Panc1 (cell line): ENCODE measurements at regions of chr10 and their contacts with region 1.

Region 1: DNA sequence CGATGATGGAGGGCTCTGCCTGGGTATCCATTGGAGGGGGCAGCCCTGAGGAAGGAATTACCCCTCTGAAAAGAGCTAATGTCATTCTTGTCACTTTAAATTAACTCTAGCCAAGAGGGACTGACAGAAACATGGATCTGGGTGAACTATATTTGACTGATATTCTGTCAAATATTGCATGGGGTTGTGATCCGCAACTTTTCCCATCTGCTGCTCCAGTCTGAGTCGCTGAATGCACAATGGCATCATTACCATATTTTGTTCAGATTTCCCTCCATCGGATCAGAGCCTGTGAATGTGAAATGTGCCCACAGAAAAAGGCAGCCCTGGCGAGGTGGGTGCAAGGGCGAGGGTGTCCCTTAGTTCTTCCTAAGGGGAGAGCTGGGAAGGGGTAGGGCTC is 100.5 kb upstream of the TCF7L2 start:
- DNase-seq: no peak
- ATAC-seq: no peak
- H3K4me3 ChIP-seq: no peak overlapping the region
- H3K27ac ChIP-seq: no peak overlapping the region
- H3K4me1 ChIP-seq: no peaks in the 10 kb centered on the region
- H3K27me3 ChIP-seq: no peaks in the 10 kb centered on the region
- CTCF ChIP-seq: no peak

Region 2: DNA sequence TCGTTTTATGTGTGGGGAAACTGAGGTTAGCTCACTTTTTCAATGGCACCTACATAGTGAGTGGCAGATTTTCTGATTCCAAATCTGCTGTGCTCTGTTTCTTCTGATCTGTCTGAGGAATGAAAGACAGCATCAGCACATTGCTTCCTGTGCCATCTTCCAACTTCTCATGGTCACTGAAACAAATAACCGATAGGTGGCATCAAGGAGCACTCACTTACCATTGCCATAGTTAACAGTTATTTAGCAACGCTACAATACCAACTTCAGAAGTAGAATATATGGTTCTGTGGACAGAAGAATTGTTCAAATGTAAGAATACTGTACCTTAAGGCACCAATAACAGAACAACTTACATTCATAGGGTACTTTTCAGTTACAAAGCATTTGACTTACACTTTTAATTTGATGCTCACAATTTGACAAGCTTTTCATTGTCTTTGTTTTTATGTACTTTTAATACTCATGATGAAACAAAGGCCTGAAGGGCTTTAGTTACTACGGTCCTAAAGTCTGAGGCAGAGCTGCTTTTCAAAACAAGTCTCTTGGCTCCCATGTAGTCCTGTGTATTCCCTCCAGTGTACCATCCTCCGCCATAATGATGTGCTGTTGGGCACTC is 128.4 kb before region 1 on chr10:
- CTCF ChIA-PET with region 1: no interaction called
- POLR2A ChIA-PET with region 1: no interaction called
- in situ Hi-C with region 1: no loop called
- intact Hi-C with region 1: no loop called
- DNase-seq: peak; percentile 43
- ATAC-seq: no peak
- H3K4me3 ChIP-seq: no peak overlapping the region
- H3K27ac ChIP-seq: peak overlapping the region; percentile 52
- H3K4me1 ChIP-seq: peaks cover 16% of the 10 kb centered on the region
- H3K27me3 ChIP-seq: no peaks in the 10 kb centered on the region
- CTCF ChIP-seq: peak; percentile 78

Region 3: GRCh38 chr10:112887968-112888367 is 38.4 kb after region 1 on chr10:
- CTCF ChIA-PET with region 1: interaction called, 12 read pairs
- POLR2A ChIA-PET with region 1: no interaction called
- in situ Hi-C with region 1: no loop called
- intact Hi-C with region 1: no loop called
- DNase-seq: no peak
- ATAC-seq: no peak
- H3K4me3 ChIP-seq: no peak overlapping the region
- H3K27ac ChIP-seq: no peak overlapping the region
- H3K4me1 ChIP-seq: no peaks in the 10 kb centered on the region
- H3K27me3 ChIP-seq: no peaks in the 10 kb centered on the region
- CTCF ChIP-seq: no peak